ENCODE measurements at regions of chr16 and their contacts with region 1.

Region 1: DNA sequence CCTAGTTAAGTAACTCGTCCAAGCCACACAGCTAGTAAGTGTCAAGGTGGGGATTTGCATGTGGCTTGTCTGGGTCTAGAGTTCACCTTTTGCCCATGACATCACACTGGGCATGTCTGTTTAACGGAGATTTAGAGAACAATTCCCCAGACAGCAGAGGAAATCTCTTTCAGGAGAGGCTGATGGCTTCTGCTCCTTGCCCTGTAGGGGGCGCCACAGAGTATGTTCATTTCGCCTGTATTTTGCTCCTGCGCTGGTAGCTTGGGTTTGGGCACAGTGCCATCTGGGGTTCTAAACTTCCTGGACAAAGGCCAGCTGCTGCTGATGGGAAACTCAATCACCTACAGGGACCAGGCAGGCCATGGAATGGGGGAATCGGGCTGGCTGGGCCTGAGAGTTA is 20.4 kb downstream of the OTOA start:
- H3K4me3 ChIP-seq: no peak overlapping the region
- H3K27ac ChIP-seq: no peak overlapping the region
- H3K4me1 ChIP-seq: no peaks in the 10 kb centered on the region
- CTCF ChIP-seq: 0 out of 2 replicates have a peak, but pooled peaks have one; percentile 21

Region 2: GRCh38 chr16:21698169-21699032 is 14.2 kb after region 1 on chr16:
- CTCF ChIA-PET with region 1: interaction called, 12 read pairs
- POLR2A ChIA-PET with region 1: no interaction called
- H3K4me3 ChIP-seq: no peak overlapping the region
- H3K27ac ChIP-seq: no peak overlapping the region
- H3K4me1 ChIP-seq: no peaks in the 10 kb centered on the region
- CTCF ChIP-seq: no peak